ENCODE measurements at regions of chr12 and their contacts with region 1.

Region 1: GRCh38 chr12:31456562-31456961 is 130.6 kb upstream of the SINHCAF start:
- DNase-seq: no peak
- ATAC-seq: no peak
- H3K4me3 Mint-ChIP-seq: no peak overlapping the region
- H3K27ac Mint-ChIP-seq: no peak overlapping the region
- H3K4me1 Mint-ChIP-seq: peaks cover 12% of the 10 kb centered on the region
- H3K27me3 Mint-ChIP-seq: no peaks in the 10 kb centered on the region
- CTCF ChIP-seq: no peak

Region 2: GRCh38 chr12:31466768-31467167 is 10.2 kb after region 1 on chr12:
- CTCF ChIA-PET with region 1: no interaction called
- POLR2A ChIA-PET with region 1: interaction called, 10 read pairs
- intact Hi-C with region 1: no loop called
- DNase-seq: no peak
- ATAC-seq: no peak
- H3K4me3 Mint-ChIP-seq: no peak overlapping the region
- H3K27ac Mint-ChIP-seq: no peak overlapping the region
- H3K4me1 Mint-ChIP-seq: peaks cover 2% of the 10 kb centered on the region
- H3K27me3 Mint-ChIP-seq: no peaks in the 10 kb centered on the region
- CTCF ChIP-seq: no peak